Activated CD4-positive, alpha-beta T cell treated with anti-CD3 and anti-CD28 coated beads for 36 hours (primary cell): ENCODE measurements at regions of chr17 and their contacts with region 1.

Region 1: GRCh38 chr17:49414622-49415350 is at the start of gene PHB1:
- DNase-seq: peak; percentile 98
- ATAC-seq: peak; percentile 100
- H3K4me3 Mint-ChIP-seq: peak within 1 kb of the TSS; percentile 100
- H3K27ac Mint-ChIP-seq: peak within 1 kb of the TSS; percentile 95
- H3K4me1 Mint-ChIP-seq: peaks cover 32% of the 10 kb centered on the region
- H3K27me3 Mint-ChIP-seq: no peaks in the 10 kb centered on the region
- total RNA-seq, gene PHB1: 346 to 350 TPM

Region 2: GRCh38 chr17:48954300-48954755 is 460.5 kb before region 1 on chr17:
- CTCF ChIA-PET with region 1: no interaction called
- POLR2A ChIA-PET with region 1: no interaction called
- intact Hi-C with region 1: no loop called
- DNase-seq: peak; percentile 40
- ATAC-seq: no peak
- H3K4me3 Mint-ChIP-seq: no peak overlapping the region
- H3K27ac Mint-ChIP-seq: no peak overlapping the region
- H3K4me1 Mint-ChIP-seq: peaks cover 3% of the 10 kb centered on the region
- H3K27me3 Mint-ChIP-seq: peaks cover 6% of the 10 kb centered on the region

Region 3: DNA sequence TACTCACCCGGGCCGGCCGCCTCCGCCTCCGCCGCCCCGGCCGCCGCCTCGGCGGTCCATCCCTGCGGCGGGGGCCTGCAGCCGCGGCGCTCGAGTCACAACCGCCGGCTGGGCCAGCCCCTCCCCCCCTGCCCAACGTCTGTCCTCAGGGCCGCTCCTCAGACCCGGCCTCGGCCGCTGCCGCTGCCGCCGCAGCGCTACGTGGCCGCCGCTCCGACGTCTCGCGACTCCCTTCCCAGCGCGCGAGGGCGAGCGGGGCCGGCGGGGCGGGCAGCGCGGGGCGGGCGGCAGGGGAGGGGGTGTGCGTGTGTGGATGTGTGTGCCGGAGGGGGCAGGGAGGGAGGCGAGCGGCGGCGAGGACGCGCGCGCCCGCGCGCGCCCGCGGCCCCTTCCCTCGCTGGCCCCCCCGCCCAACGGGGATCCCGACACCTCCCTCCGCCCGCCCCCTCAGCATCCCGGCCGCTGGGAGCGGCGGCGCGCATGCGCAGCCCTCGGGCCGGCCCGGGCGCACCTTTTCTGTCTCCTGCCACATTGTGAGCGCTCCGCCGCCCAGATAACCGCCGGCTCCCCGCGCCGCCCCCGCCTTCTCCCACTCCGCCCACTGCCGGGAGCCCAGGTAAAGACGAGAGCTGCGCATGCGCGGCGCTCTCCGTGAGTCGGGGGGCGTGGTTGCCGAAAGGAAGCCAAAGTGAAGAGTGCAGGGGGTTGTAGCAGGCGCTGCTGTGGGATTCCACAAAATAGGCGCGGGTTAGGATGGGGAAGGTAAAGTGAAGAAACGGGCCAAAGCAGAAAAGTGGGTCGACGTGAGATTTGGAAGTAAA is 52.7 kb before region 1 on chr17 and contains the start of gene ZNF652:
- CTCF ChIA-PET with region 1: interaction called, 3 read pairs
- POLR2A ChIA-PET with region 1: no interaction called
- intact Hi-C with region 1: loop called (anchors 1 to 2 kb)
- DNase-seq: peak; percentile 93
- ATAC-seq: peak; percentile 57
- H3K4me3 Mint-ChIP-seq: peak within 1 kb of the TSS; percentile 92
- H3K27ac Mint-ChIP-seq: peak within 1 kb of the TSS; percentile 92
- H3K4me1 Mint-ChIP-seq: peaks cover 50% of the 10 kb centered on the region
- H3K27me3 Mint-ChIP-seq: peaks cover 1% of the 10 kb centered on the region
- total RNA-seq, gene ZNF652: 5.2 to 7.0 TPM

Region 4: GRCh38 chr17:49496183-49496866 is 81.5 kb after region 1 on chr17:
- CTCF ChIA-PET with region 1: no interaction called
- POLR2A ChIA-PET with region 1: no interaction called
- intact Hi-C with region 1: loop called in 1 of 2 experiments (anchors 1 kb)
- DNase-seq: peak; percentile 92
- ATAC-seq: peak; percentile 85
- H3K4me3 Mint-ChIP-seq: peak overlapping the region; percentile 63
- H3K27ac Mint-ChIP-seq: no peak overlapping the region
- H3K4me1 Mint-ChIP-seq: peaks cover 16% of the 10 kb centered on the region
- H3K27me3 Mint-ChIP-seq: peaks cover 51% of the 10 kb centered on the region

Region 5: DNA sequence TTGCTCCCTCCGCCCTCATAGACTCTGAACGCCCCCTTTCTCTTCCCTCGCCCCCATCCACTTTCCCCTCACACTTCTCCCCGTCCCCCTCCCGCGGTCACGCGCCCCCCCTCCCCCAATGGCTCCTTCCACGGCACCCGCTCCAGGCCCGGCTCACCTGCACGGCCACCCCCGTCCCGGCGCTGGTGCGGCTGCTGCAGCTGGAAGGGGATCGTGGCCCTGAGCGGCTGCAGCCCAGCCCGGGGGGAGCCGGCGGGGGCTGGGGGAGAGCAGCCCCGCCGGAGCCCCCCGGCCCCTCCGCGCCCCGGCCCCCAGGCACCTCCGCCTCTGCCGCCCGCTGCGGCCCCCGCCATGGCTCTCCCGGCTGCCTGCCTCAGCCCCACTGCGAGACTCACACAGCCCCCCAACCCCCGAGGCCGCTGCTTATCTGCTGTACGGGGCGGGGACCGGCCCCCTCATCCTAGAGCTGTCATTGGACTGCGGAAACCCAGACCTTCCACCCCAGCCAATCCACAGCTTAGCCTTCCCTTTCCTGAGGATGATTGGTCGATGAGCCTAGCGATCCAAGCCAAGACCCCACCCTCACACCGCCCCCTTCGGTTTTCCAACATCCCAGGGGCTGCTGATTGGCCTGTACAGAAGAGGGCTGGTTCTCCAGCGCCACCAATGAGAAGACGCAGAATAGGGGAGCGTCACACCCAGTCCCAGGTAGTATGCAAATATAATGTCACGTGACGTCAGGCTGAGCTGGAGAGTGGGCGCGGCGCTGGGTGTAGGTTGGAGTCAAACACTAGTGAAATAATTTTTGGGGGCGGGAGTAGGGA is 349.2 kb after region 1 on chr17 and contains the start of gene FAM117A:
- CTCF ChIA-PET with region 1: no interaction called
- POLR2A ChIA-PET with region 1: no interaction called
- intact Hi-C with region 1: loop called in 1 of 2 experiments (anchors 1 kb)
- DNase-seq: peak; percentile 98
- ATAC-seq: peak; percentile 97
- H3K4me3 Mint-ChIP-seq: peak within 1 kb of the TSS; percentile 89
- H3K27ac Mint-ChIP-seq: peak within 1 kb of the TSS; percentile 88
- H3K4me1 Mint-ChIP-seq: peaks cover 52% of the 10 kb centered on the region
- H3K27me3 Mint-ChIP-seq: no peaks in the 10 kb centered on the region
- total RNA-seq, gene FAM117A: 14.1 to 15.4 TPM

Region 6: DNA sequence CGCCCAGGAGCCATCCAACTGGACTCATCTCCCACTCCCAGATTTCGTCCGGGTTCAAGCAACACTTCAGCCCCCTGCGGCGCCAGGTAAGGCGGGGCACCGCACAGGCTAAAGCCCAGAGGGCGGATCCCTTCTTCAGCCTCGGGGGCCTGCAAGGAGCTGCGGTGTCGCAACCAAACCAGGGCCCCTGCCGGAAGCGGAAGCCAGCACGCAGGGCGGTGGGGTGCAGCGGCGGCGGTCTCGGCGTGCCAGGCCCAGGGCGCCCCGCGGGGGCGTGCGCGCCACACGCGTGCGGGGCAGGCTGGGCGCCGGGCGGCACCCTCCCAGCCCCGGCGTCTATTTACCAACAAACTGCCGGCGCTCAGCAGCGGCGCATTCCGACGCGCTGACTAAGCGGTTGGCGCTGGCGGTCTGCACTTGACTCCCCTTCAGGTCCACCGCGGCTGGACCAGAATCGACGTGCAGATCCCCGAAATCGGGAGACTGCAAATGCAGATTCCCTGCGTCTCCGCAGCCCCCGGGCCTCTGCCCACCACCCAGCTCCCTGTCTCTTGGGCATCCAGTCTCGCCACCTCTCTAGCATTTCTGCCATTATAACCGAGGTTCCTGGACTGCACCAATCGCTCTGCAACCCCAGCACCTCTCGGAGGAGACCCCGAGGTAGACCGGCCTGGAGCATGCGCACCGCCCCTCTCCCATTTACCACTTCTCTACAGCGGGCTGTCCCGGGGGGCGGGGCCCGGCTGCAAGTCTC is 553.8 kb after region 1 on chr17:
- CTCF ChIA-PET with region 1: no interaction called
- POLR2A ChIA-PET with region 1: no interaction called
- intact Hi-C with region 1: loop called in 1 of 2 experiments (anchors 1 kb)
- DNase-seq: peak; percentile 85
- ATAC-seq: peak; percentile 83
- H3K4me3 Mint-ChIP-seq: peak overlapping the region; percentile 82
- H3K27ac Mint-ChIP-seq: peak overlapping the region; percentile 61
- H3K4me1 Mint-ChIP-seq: peaks cover 34% of the 10 kb centered on the region
- H3K27me3 Mint-ChIP-seq: peaks cover 70% of the 10 kb centered on the region